ENCODE measurements at regions of chr15 and their contacts with region 1.

Region 1: DNA sequence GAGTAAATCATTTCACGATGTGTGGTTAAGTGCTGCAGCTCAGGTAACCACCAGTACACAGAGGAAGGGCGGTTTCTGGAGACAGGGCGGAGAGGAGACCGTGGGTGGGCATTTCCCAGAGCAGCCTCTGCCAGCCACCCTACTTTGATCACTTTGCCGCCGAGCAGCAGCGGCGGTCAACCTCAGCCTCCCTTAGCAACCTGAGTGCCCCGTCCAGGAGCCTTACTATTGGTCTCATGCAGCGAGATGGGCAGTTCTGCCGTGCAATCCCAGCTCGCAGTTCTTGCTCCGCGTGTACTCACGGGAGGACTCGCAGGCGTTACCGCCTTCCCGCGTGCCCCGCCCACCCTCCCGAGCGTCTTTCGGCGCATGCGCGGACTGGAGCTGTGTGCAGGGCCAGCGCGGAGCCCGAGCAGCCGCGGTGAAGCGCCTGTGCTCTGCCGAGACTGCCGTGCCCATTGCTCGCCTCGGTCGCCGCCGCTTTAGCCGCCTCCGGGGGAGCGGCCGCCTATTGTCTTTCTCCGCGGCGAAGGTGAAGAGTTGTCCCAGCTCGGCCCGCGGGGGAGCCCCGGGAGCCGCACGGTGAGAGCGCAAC is at the start of gene AKAP13:
- DNase-seq: peak; percentile 96
- ATAC-seq: peak; percentile 92
- H3K4me3 ChIP-seq: peak within 1 kb of the TSS; percentile 65 to 80
- H3K27ac ChIP-seq: peak within 1 kb of the TSS; percentile 92
- H3K4me1 ChIP-seq: peaks cover 26% of the 10 kb centered on the region
- H3K27me3 ChIP-seq: no peaks in the 10 kb centered on the region
- CTCF ChIP-seq: no peak
- total RNA-seq, gene AKAP13: 94.2 TPM

Region 2: GRCh38 chr15:85330901-85331588 is 49.3 kb before region 1 on chr15:
- CTCF ChIA-PET with region 1: interaction called, 6 read pairs
- POLR2A ChIA-PET with region 1: no interaction called
- in situ Hi-C with region 1: no loop called
- intact Hi-C with region 1: loop called (anchors 2 kb)
- DNase-seq: peak; percentile 89
- ATAC-seq: peak; percentile 90
- H3K4me3 ChIP-seq: peak overlapping the region; percentile 8 to 66; a peak in 3 of 4 replicates
- H3K27ac ChIP-seq: peak overlapping the region; percentile 92
- H3K4me1 ChIP-seq: peaks cover 37% of the 10 kb centered on the region
- H3K27me3 ChIP-seq: no peaks in the 10 kb centered on the region
- CTCF ChIP-seq: peak; percentile 99

Region 3: DNA sequence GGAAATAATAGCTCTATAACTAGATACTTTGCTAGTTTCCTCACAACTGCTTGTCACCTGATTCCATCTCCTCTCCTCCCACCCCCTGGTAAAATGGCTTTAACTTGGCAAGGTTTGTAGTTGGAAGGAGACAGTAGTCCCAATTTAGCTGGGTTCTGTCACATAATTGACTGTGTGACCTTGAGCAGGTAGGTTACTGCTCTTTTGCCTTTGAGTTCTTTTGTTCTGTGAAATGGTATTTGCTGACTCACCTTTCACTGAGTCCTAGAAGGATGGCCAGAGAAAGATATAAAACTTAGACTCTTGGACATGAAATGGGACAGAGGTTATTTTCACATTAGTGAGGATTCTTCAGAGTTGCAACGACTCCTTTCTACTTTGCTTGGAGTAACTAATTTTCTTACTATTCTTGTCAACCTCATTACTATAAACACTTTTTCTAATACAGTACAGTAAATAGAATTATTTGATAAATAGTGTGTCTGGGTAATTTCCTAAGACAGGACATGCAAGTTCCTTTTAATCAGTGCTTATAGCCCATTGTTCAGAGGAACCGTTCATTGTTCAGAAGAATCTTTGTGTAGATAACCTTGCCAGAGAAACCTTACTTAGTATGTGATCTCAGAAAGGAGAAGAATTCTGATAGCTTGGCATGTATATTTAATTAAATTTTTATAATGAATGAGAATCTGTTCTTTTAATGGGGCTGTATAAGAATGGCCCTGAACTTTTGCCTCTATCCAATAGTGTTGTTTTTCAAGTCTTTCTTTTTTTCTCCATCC is 14.4 kb after region 1 on chr15:
- CTCF ChIA-PET with region 1: no interaction called
- POLR2A ChIA-PET with region 1: interaction called, 11 read pairs
- in situ Hi-C with region 1: no loop called
- intact Hi-C with region 1: no loop called
- DNase-seq: no peak
- ATAC-seq: peak; percentile 43; the same call in 1 of the 2 replicates
- H3K4me3 ChIP-seq: no peak overlapping the region
- H3K27ac ChIP-seq: peak overlapping the region; percentile 18
- H3K4me1 ChIP-seq: peaks cover 34% of the 10 kb centered on the region
- H3K27me3 ChIP-seq: no peaks in the 10 kb centered on the region
- CTCF ChIP-seq: no peak

Region 4: DNA sequence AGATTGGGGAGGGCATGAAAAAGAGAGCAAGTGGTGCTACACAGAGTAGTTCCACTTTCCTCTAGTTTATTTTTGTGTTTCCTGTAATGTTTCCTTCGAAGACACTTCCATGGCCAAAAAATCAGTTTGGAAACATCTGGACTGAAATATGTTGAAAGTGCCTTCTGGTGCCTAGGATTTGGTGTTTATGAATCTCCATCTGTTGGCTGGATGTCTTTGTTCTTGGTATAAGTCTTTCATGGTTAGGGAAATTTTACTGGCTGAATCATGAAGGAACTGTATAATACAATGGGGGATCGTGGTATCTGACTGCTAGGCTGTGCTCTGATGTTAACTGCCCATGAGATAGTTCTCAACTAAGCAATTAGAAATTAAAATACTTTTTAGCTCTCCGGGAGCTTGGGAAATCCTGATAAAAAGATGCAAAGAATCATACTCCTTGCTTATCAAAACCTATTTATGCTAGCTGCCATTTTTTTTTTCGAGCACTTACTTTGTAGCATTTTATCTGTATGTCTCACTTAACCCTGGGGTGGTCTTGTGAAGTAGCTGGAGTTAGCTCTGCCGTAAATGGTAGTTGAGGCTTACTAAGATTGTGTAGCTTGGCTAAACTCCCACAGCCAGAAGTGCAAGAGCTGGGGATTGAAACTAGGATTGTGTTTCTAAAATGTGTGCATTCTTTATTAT is 22.0 kb after region 1 on chr15:
- CTCF ChIA-PET with region 1: no interaction called
- POLR2A ChIA-PET with region 1: interaction called, 16 read pairs
- in situ Hi-C with region 1: no loop called
- intact Hi-C with region 1: no loop called
- DNase-seq: no peak
- ATAC-seq: no peak
- H3K4me3 ChIP-seq: peak overlapping the region in 1 of 2 experiments; percentile 3; a peak in 2 of 4 replicates
- H3K27ac ChIP-seq: peak overlapping the region; percentile 78
- H3K4me1 ChIP-seq: peaks cover 60% of the 10 kb centered on the region
- H3K27me3 ChIP-seq: no peaks in the 10 kb centered on the region
- CTCF ChIP-seq: no peak

Region 5: GRCh38 chr15:85412956-85413854 is 32.9 kb after region 1 on chr15:
- CTCF ChIA-PET with region 1: interaction called, 17 read pairs
- POLR2A ChIA-PET with region 1: no interaction called
- in situ Hi-C with region 1: no loop called
- intact Hi-C with region 1: no loop called
- DNase-seq: peak; percentile 97
- ATAC-seq: peak; percentile 97
- H3K4me3 ChIP-seq: peak overlapping the region; percentile 27 to 54
- H3K27ac ChIP-seq: peak overlapping the region; percentile 95
- H3K4me1 ChIP-seq: peaks cover 60% of the 10 kb centered on the region
- H3K27me3 ChIP-seq: no peaks in the 10 kb centered on the region
- CTCF ChIP-seq: no peak